Stomach (tissue), 19 donors: ENCODE measurements at regions of chr9 and their contacts with region 1.

Region 1: DNA sequence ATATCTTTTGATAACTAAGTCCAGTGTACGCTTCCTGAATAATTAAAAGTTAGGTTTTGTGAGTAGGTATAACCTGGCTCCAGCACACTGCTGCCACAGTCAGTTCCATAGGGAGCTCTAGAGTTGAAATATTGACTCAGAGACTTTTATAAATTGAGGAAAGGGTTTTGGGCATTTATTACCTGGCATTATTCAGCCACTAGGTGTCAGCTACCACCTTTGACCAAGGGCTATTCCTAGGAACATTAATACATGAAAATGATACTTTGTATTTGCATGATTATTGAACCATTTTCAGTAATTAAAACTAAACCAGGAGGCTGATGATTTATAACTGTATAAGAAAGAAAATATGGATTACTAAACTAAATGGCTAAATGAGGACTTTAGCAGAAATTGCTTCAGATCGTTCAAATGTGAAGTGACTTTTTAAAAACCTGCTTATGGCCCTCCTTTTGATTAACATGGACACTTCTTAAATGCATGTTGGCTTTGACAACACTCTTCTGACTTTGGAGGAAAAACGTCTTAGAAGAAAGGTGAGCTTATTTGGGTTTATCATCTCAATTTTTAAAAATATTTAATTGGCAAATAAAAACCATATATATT is 83.0 kb downstream of the SMC2 start:
- DNase-seq: peak in 1 of 2 donors; percentile 34
- H3K4me3 ChIP-seq: no peak overlapping the region
- H3K27ac ChIP-seq: no peak overlapping the region
- H3K4me1 ChIP-seq: no peaks in the 10 kb centered on the region
- H3K27me3 ChIP-seq: no peaks in the 10 kb centered on the region
- CTCF ChIP-seq: peak in 4 of 7 experiments; percentile 40 to 66 (median 52)
- EP300 ChIP-seq: no peak
- POLR2A ChIP-seq: no peak

Region 2: GRCh38 chr9:104386425-104387069 is 209.4 kb after region 1 on chr9:
- intact Hi-C with region 1: loop called (anchors 5 kb)
- DNase-seq: peak in 1 of 2 donors; percentile 61
- H3K4me3 ChIP-seq: no peak overlapping the region
- H3K27ac ChIP-seq: no peak overlapping the region
- H3K4me1 ChIP-seq: peaks cover 0 to 11% (median 3%) of the 10 kb centered on the region in 4 donors
- H3K27me3 ChIP-seq: no peaks in the 10 kb centered on the region
- CTCF ChIP-seq: peak in 5 of 7 experiments; percentile 39 to 66 (median 55)
- EP300 ChIP-seq: no peak
- POLR2A ChIP-seq: no peak